Heart right ventricle (tissue), 16 donors: ENCODE measurements at regions of chr1 and their contacts with region 1.

Region 1: GRCh38 chr1:175023043-175023921 is at the start of gene MRPS14:
- DNase-seq: peak; percentile 97 to 99
- ATAC-seq: peak; percentile 99 to 100 (median 99)
- H3K4me3 ChIP-seq: peak within 1 kb of the TSS; percentile 69 to 93 (median 82)
- H3K27ac ChIP-seq: peak within 1 kb of the TSS; percentile 26 to 92 (median 79)
- H3K4me1 ChIP-seq: peaks cover 0 to 20% (median 14%) of the 10 kb centered on the region in 9 donors
- H3K27me3 ChIP-seq: no peaks in the 10 kb centered on the region
- CTCF ChIP-seq: no peak
- total RNA-seq, gene MRPS14: 20.2 to 31.5 (median 25.7) TPM

Region 2: GRCh38 chr1:174999216-174999925 is 23.9 kb before region 1 on chr1:
- intact Hi-C with region 1: loop called in 1 of 10 experiments (anchors 2 kb)
- DNase-seq: peak; percentile 98
- ATAC-seq: peak; percentile 89 to 97 (median 95)
- H3K4me3 ChIP-seq: peak overlapping the region; percentile 69 to 90 (median 80)
- H3K27ac ChIP-seq: peak overlapping the region; percentile 83 to 100 (median 96)
- H3K4me1 ChIP-seq: peaks cover 0 to 63% (median 18%) of the 10 kb centered on the region in 9 donors
- H3K27me3 ChIP-seq: no peaks in the 10 kb centered on the region
- CTCF ChIP-seq: no peak

Region 3: GRCh38 chr1:175124861-175125260 is 101.6 kb after region 1 on chr1:
- intact Hi-C with region 1: loop called in 1 of 10 experiments (anchors 2 kb)
- DNase-seq: no peak
- ATAC-seq: no peak
- H3K4me3 ChIP-seq: peak overlapping the region in 2 of 10 donors; percentile 5 to 7
- H3K27ac ChIP-seq: peak overlapping the region in 5 of 10 donors; percentile 1 to 56 (median 31)
- H3K4me1 ChIP-seq: peaks cover 0 to 44% (median 24%) of the 10 kb centered on the region in 9 donors
- H3K27me3 ChIP-seq: no peaks in the 10 kb centered on the region
- CTCF ChIP-seq: no peak

Region 4: GRCh38 chr1:175221666-175222175 is 198.4 kb after region 1 on chr1:
- intact Hi-C with region 1: loop called in 1 of 10 experiments (anchors 10 kb)
- DNase-seq: peak in 1 of 2 donors; percentile 43
- ATAC-seq: peak; percentile 48 to 82 (median 66)
- H3K4me3 ChIP-seq: no peak overlapping the region
- H3K27ac ChIP-seq: peak overlapping the region in 7 of 10 donors; percentile 8 to 71 (median 48)
- H3K4me1 ChIP-seq: peaks cover 17 to 48% (median 39%) of the 10 kb centered on the region in 9 donors
- H3K27me3 ChIP-seq: no peaks in the 10 kb centered on the region
- CTCF ChIP-seq: peak in 7 of 9 donors; percentile 29 to 58 (median 41)